Calu3 (cell line): ENCODE measurements at regions of chr12 and their contacts with region 1.

Region 1: GRCh38 chr12:40152783-40153383 is 47.0 kb upstream of the SLC2A13 start:
- DNase-seq: peak; percentile 37
- H3K4me3 Mint-ChIP-seq: no peak overlapping the region
- H3K27ac Mint-ChIP-seq: no peak overlapping the region
- H3K4me1 Mint-ChIP-seq: peaks cover 8% of the 10 kb centered on the region
- H3K27me3 Mint-ChIP-seq: no peaks in the 10 kb centered on the region
- CTCF ChIP-seq: peak; percentile 59

Region 2: GRCh38 chr12:40192704-40193255 is 39.9 kb after region 1 on chr12:
- CTCF ChIA-PET with region 1: no interaction called
- intact Hi-C with region 1: no loop called
- DNase-seq: no peak
- H3K4me3 Mint-ChIP-seq: no peak overlapping the region
- H3K27ac Mint-ChIP-seq: no peak overlapping the region
- H3K4me1 Mint-ChIP-seq: no peaks in the 10 kb centered on the region
- H3K27me3 Mint-ChIP-seq: no peaks in the 10 kb centered on the region
- CTCF ChIP-seq: no peak

Region 3: GRCh38 chr12:40312982-40313576 is 160.2 kb after region 1 on chr12:
- CTCF ChIA-PET with region 1: no interaction called
- intact Hi-C with region 1: loop called (anchors 1 kb)
- DNase-seq: peak; percentile 1
- H3K4me3 Mint-ChIP-seq: no peak overlapping the region
- H3K27ac Mint-ChIP-seq: no peak overlapping the region
- H3K4me1 Mint-ChIP-seq: no peaks in the 10 kb centered on the region
- H3K27me3 Mint-ChIP-seq: no peaks in the 10 kb centered on the region
- CTCF ChIP-seq: peak; percentile 11